Heart right ventricle (tissue), 16 donors: ENCODE measurements at regions of chr7 and their contacts with region 1.

Region 1: GRCh38 chr7:80134536-80135320 is at the start of gene GNAI1:
- DNase-seq: peak; percentile 50 to 75
- ATAC-seq: peak; percentile 79 to 92 (median 88)
- H3K4me3 ChIP-seq: peak within 1 kb of the TSS; percentile 80 to 100 (median 93)
- H3K27ac ChIP-seq: peak within 1 kb of the TSS; percentile 78 to 95 (median 87)
- H3K4me1 ChIP-seq: peaks cover 0 to 44% (median 26%) of the 10 kb centered on the region in 9 donors
- H3K27me3 ChIP-seq: peaks cover 0 to 33% (median 0%) of the 10 kb centered on the region in 7 donors
- CTCF ChIP-seq: peak; percentile 19 to 59 (median 37)
- total RNA-seq, gene GNAI1: 9.1 to 19.9 (median 13.6) TPM

Region 2: DNA sequence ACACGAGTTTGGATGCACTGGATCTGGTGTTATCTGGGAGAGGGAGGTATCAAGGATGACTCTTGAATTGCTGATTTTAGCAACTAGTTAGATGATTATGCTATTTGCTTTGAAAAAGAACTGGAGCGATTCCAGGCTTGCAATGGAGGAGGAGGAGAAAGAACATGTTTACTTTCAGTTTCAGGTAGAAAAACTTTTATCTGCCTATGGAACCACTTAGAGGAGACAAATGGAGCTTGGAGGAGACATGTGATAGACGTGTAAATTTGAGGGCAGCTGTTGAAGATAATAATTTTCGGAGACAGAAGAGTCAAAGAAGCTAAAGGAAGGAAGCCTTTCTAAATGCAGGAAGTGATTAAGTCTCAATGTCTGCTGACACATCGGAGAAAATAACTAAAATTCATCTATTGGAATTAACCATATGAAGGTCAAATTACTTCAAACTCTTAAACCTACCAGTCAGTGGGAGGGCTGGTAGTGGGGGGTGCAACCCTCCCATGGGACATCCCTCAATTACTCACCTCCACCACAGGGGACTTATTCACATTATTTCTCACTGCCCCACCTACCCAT is 56.5 kb before region 1 on chr7:
- intact Hi-C with region 1: loop called in 1 of 10 experiments (anchors 10 kb)
- DNase-seq: no peak
- ATAC-seq: no peak
- H3K4me3 ChIP-seq: peak overlapping the region in 9 of 10 donors; percentile 5 to 49 (median 39)
- H3K27ac ChIP-seq: no peak overlapping the region
- H3K4me1 ChIP-seq: peaks cover 0 to 11% (median 0%) of the 10 kb centered on the region in 9 donors
- H3K27me3 ChIP-seq: no peaks in the 10 kb centered on the region
- CTCF ChIP-seq: no peak

Region 3: DNA sequence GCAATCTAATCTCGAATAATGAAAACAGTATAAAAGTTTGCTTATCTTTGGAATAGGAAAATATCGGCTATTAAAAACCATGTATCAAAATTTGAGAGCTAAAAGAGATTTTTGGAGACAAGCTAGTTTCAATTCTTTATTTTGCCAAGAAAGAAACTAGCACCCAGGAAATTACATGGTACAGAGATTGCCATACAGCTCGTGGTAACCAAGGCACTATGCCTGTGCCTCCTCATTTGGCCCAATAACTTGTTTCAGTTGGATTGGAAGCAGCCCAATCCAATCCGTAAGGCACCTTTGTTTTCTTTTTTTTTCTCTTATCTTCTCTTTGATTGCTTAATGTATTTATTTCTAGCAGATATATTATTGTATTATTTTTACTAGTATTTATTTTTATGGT is 54.9 kb after region 1 on chr7:
- intact Hi-C with region 1: loop called in 1 of 10 experiments (anchors 5 kb)
- DNase-seq: no peak
- ATAC-seq: no peak
- H3K4me3 ChIP-seq: no peak overlapping the region
- H3K27ac ChIP-seq: peak overlapping the region in 1 of 10 donors; percentile 5
- H3K4me1 ChIP-seq: peaks cover 0 to 28% (median 3%) of the 10 kb centered on the region in 9 donors
- H3K27me3 ChIP-seq: no peaks in the 10 kb centered on the region
- CTCF ChIP-seq: no peak

Region 4: GRCh38 chr7:80249619-80250295 is 115.0 kb after region 1 on chr7:
- intact Hi-C with region 1: no loop called
- DNase-seq: no peak
- ATAC-seq: no peak
- H3K4me3 ChIP-seq: no peak overlapping the region
- H3K27ac ChIP-seq: no peak overlapping the region
- H3K4me1 ChIP-seq: peaks cover 0 to 8% (median 3%) of the 10 kb centered on the region in 9 donors
- H3K27me3 ChIP-seq: no peaks in the 10 kb centered on the region
- CTCF ChIP-seq: no peak

Region 5: GRCh38 chr7:80263333-80263732 is 128.6 kb after region 1 on chr7:
- intact Hi-C with region 1: no loop called
- DNase-seq: no peak
- ATAC-seq: peak in 4 of 8 donors; percentile 17 to 42 (median 31)
- H3K4me3 ChIP-seq: peak overlapping the region in 1 of 10 donors; percentile 14
- H3K27ac ChIP-seq: no peak overlapping the region
- H3K4me1 ChIP-seq: no peaks in the 10 kb centered on the region
- H3K27me3 ChIP-seq: no peaks in the 10 kb centered on the region
- CTCF ChIP-seq: no peak

Region 6: GRCh38 chr7:80277434-80278427 is 143.0 kb after region 1 on chr7:
- intact Hi-C with region 1: loop called in 6 of 10 experiments (anchors 5 to 10 kb)
- DNase-seq: peak in 1 of 2 donors; percentile 12
- ATAC-seq: peak in 7 of 8 donors; percentile 64 to 88 (median 83)
- H3K4me3 ChIP-seq: no peak overlapping the region
- H3K27ac ChIP-seq: peak overlapping the region in 8 of 10 donors; percentile 23 to 84 (median 72)
- H3K4me1 ChIP-seq: peaks cover 0 to 64% (median 30%) of the 10 kb centered on the region in 9 donors
- H3K27me3 ChIP-seq: no peaks in the 10 kb centered on the region
- CTCF ChIP-seq: no peak

Region 7: DNA sequence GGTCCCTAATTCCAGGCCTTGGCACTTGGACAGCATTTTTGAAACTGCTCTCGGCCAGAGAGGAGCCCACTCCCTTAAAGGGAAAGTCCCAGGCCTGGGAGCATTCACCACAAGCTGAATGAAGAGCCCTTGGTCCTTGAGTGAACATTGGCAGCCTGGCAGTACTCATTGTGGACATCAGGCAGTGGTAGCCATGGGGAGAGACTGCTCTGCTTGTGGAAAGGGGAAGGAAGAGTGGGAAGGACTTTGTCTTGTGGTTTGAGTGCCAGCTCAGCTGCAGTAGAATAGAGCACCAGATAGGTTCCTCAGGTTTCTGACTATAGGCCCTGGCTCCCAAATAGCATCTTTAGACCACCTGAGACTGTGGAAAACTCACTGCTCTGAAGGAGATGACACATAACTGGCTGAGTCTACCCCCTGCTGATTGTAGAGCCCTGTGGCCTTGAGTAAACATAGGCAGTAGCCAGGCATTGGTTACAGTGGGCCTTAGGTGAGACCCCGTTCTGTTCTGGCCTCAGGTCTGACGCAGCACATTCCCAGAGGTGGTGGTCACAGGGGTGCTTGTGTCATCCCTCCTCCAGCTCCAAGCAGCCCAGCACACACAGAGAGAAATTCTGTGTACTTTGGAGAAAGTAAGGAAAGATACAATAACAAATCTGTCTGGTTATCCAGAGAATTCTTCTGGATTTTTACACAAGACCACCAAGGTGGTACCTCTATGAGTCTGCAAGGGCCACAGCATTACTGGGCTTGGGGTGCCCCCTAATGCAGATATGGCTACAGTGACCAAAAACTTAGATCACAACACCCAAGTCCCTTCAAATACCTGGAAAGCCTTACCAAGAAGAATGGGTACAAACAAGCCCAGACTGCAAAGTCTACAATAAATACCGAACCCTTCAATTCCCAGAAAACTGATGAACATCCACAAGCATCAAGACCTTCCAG is 153.7 kb after region 1 on chr7:
- intact Hi-C with region 1: loop called in 3 of 10 experiments (anchors 5 to 10 kb)
- DNase-seq: no peak
- ATAC-seq: no peak
- H3K4me3 ChIP-seq: no peak overlapping the region
- H3K27ac ChIP-seq: no peak overlapping the region
- H3K4me1 ChIP-seq: peaks cover 0 to 8% (median 0%) of the 10 kb centered on the region in 9 donors
- H3K27me3 ChIP-seq: no peaks in the 10 kb centered on the region
- CTCF ChIP-seq: peak in 7 of 9 donors; percentile 18 to 62 (median 37)

Region 8: DNA sequence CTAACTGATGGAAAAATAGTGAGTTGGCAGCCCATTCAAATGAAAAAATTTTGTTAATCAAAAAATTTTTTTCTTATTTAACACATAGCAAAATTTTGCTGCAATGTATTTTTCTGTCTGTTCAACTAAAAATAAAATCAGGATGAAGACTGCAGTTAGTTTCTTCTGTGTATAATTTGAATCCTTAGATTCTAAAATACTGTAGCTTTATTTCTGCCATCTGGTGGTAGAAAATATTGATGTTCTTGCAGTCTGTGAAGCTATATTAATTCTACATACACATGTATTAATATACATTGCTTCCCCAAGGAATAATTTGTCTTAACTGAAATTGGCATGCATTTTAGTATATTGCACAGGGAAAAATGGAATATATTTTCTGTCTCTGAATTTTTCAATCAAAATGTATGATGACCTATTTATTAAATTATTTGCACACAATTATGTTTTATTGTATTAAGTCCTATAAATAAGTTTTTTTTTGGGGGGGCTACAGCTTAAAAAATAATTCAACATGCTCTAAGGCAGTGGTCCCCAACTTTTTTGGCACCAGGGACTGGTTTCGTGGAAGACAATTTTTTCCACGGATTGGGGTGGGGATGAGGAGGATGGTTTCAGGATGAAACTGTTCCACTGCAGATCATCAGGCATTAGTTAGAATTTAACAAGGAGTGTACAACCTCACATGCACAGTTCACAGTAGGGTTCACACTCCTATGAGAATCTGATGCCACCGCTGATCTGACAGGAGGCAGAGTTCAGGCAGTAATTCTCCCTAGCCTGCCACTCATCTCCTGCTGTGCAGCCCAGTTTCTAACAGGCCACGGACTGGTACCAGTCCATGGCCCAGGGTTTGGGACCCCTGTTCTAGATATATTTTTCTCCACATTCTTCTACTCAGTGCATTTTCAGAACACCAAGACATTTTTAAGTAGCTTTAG is 257.8 kb after region 1 on chr7:
- intact Hi-C with region 1: loop called in 5 of 10 experiments (anchors 5 to 10 kb)
- DNase-seq: no peak
- ATAC-seq: no peak
- H3K4me3 ChIP-seq: no peak overlapping the region
- H3K27ac ChIP-seq: no peak overlapping the region
- H3K4me1 ChIP-seq: no peaks in the 10 kb centered on the region
- H3K27me3 ChIP-seq: no peaks in the 10 kb centered on the region
- CTCF ChIP-seq: peak; percentile 15 to 78 (median 62)